ENCODE measurements at regions of chr21 and their contacts with region 1.

Region 1: DNA sequence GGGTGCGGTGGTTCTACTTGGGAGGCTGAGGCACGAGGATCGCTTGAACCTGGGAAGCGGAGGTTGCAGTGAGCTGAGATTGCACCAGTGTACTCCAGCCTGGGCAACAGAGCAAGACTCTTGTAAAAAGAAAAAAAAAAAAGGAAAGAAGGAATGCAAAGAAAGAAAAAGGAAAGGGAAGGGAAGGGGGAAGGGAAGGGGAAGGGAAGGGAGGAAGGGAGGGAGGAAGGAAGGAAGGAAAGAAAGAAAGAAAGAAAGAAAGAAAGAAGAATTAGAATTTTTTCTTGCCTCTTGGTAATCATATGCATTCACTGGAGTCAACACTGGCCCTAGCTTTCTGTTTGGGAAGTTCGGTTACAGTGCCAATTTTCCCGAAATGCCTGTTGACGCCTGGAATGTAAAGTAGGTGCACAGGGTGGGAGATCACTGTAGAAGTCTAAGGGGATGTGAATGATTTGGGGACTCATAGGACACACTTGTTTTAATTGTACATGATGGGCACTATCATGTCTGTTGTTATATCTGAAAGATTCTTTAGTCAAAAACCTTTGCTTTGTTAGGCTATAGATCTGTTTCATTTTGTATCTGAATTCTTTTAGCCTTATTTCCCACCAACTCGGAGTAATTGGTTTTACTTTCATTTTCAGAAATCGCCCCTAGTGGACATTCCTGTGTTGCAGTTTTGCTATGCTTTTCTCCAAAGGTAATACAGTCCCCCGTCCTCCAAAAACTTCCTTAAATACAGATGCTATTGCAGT is 59.8 kb upstream of the MORC3 start:
- DNase-seq: peak in 30 of 35 experiments; percentile 8 to 82 (median 36)
- ATAC-seq: peak; percentile 82 to 90 (median 85)
- H3K4me3 ChIP-seq: peak overlapping the region; percentile 39 to 53
- H3K4me3 Mint-ChIP-seq: peak overlapping the region; percentile 76 to 85 (median 77)
- H3K27ac ChIP-seq: peak overlapping the region; percentile 70
- H3K27ac Mint-ChIP-seq: peak overlapping the region; percentile 90 to 91
- H3K4me1 ChIP-seq: peaks cover 5 to 7% of the 10 kb centered on the region in 2 experiments
- H3K4me1 Mint-ChIP-seq: peaks cover 11 to 23% (median 19%) of the 10 kb centered on the region in 3 donors
- H3K27me3 ChIP-seq: no peaks in the 10 kb centered on the region
- H3K27me3 Mint-ChIP-seq: no peaks in the 10 kb centered on the region

Region 2: GRCh38 chr21:36079010-36079649 is 181.1 kb before region 1 on chr21:
- CTCF ChIA-PET with region 1: no interaction called
- POLR2A ChIA-PET with region 1: no interaction called
- DNase-seq: peak in 19 of 35 experiments; percentile 9 to 64 (median 23)
- ATAC-seq: peak; percentile 84 to 93 (median 89)
- H3K4me3 ChIP-seq: peak overlapping the region in 1 of 2 donors; percentile 46
- H3K4me3 Mint-ChIP-seq: peak overlapping the region; percentile 71 to 88 (median 83)
- H3K27ac ChIP-seq: peak overlapping the region; percentile 85
- H3K27ac Mint-ChIP-seq: peak overlapping the region; percentile 95 to 98
- H3K4me1 ChIP-seq: peaks cover 0 to 14% of the 10 kb centered on the region in 2 experiments
- H3K4me1 Mint-ChIP-seq: peaks cover 25 to 42% (median 35%) of the 10 kb centered on the region in 3 donors
- H3K27me3 ChIP-seq: no peaks in the 10 kb centered on the region
- H3K27me3 Mint-ChIP-seq: no peaks in the 10 kb centered on the region

Region 3: DNA sequence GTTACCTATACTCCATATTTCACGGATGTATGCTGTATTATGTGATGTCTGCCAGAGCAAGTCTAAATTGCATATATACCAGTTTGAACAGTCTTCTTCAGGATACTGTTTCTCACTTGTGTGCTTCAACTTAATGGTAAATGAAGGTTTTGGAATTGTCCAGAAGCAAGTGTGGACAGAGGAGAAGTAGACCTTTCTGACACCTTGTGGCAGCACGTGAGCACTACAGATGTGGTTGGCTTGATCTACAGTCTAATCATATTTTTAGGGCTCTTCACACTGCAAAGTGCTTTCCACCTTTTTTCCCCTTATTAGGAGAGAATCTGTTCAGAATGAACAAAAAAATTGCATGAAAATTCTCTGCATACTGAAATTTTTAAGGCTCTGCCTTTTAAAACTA is 70.7 kb after region 1 on chr21:
- CTCF ChIA-PET with region 1: interaction called, 3 read pairs
- POLR2A ChIA-PET with region 1: interaction called in 1 of 2 experiments, 14 read pairs
- DNase-seq: peak in 32 of 35 experiments; percentile 11 to 75 (median 41)
- ATAC-seq: peak; percentile 78 to 85 (median 82)
- H3K4me3 ChIP-seq: no peak overlapping the region
- H3K4me3 Mint-ChIP-seq: peak overlapping the region in 2 of 3 donors; percentile 21 to 32
- H3K27ac ChIP-seq: no peak overlapping the region
- H3K27ac Mint-ChIP-seq: peak overlapping the region; percentile 74 to 76
- H3K4me1 ChIP-seq: peaks cover 8 to 53% of the 10 kb centered on the region in 2 experiments
- H3K4me1 Mint-ChIP-seq: peaks cover 49 to 65% (median 58%) of the 10 kb centered on the region in 3 donors
- H3K27me3 ChIP-seq: no peaks in the 10 kb centered on the region
- H3K27me3 Mint-ChIP-seq: no peaks in the 10 kb centered on the region

Measured in T-cell (primary cell).